ENCODE measurements at regions of chr11 and their contacts with region 1.

Region 1: GRCh38 chr11:57657194-57658022 is at the start of gene CLP1:
- DNase-seq: peak; percentile 92 to 97
- H3K4me3 ChIP-seq: peak within 1 kb of the TSS; percentile 86 to 99 (median 92)
- H3K27ac ChIP-seq: no peak within 1 kb of the TSS
- H3K4me1 ChIP-seq: no peaks in the 10 kb centered on the region; a peak in 3 of 7 replicates
- H3K27me3 ChIP-seq: no peaks in the 10 kb centered on the region; a peak in 2 of 7 replicates
- CTCF ChIP-seq: no peak
- EP300 ChIP-seq: no peak
- POLR2A ChIP-seq: peak; percentile 17 to 73
- RAD21 ChIP-seq: 0 out of 4 replicates have a peak, but pooled peaks of 1 of the 2 experiments have one; percentile 3
- total RNA-seq, gene CLP1: 29.3 and 29.9 TPM in 2 replicates

Region 2: GRCh38 chr11:57597916-57598830 is 59.2 kb before region 1 on chr11:
- CTCF ChIA-PET with region 1: no interaction called
- POLR2A ChIA-PET with region 1: interaction called, 1,546 read pairs
- DNase-seq: peak; percentile 75 to 87
- H3K4me3 ChIP-seq: peak overlapping the region; percentile 41 to 64 (median 54)
- H3K27ac ChIP-seq: peak overlapping the region; percentile 68; the same call in 1 of the 2 replicates
- H3K4me1 ChIP-seq: peaks cover 7 to 17% (median 11%) of the 10 kb centered on the region in 4 experiments
- H3K27me3 ChIP-seq: no peaks in the 10 kb centered on the region
- CTCF ChIP-seq: no peak
- EP300 ChIP-seq: peak in 1 of 2 experiments; percentile 86; a peak in 1 of 3 replicates
- POLR2A ChIP-seq: no peak; a peak in 1 of 3 replicates
- RAD21 ChIP-seq: peak in 1 of 2 experiments; percentile 12; a peak in 1 of 4 replicates

Region 3: DNA sequence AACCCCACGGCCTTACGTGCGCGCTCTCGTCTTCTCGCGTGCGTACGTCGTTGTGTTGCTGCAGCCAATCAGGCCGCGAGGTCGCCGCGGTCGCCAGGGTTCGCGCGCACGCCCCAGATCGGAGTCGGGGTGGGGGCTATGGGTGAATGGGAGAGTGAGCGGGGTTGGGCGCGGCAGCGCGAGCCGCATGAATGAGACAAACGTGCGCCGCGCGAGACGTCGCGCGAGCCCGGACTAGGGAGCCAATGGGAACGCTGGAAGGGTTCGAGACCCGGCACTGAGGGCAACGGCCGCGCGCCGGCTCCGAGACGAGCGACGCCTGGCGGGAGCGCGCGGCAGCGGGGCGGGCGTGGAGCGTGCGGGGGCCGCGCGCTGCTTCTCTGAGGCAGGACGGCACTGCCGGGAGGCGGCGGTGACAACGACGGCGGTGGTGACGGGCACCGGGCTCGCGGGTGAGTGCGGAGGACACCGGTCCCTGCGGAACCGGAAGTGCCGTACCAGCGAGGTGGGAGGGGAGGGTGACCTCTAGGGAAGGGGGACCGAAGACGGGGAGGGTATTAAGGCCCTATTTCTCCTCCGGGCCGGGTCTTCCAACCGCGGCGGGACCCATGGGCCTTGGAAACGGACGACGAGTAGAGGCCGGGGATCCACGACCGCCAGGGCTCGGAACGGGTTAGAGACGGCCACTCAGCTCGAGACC is 10.5 kb after region 1 on chr11 and contains the start of gene ZDHHC5:
- CTCF ChIA-PET with region 1: interaction called, 6 read pairs
- POLR2A ChIA-PET with region 1: interaction called, 79 read pairs
- DNase-seq: peak; percentile 97
- H3K4me3 ChIP-seq: peak within 1 kb of the TSS; percentile 90 to 95 (median 94)
- H3K27ac ChIP-seq: peak within 1 kb of the TSS; percentile 99
- H3K4me1 ChIP-seq: peaks cover 0 to 7% (median 2%) of the 10 kb centered on the region in 4 experiments; a peak in 3 of 7 replicates
- H3K27me3 ChIP-seq: no peaks in the 10 kb centered on the region
- CTCF ChIP-seq: peak; percentile 14 to 46 (median 37); a peak in 2 of 4 replicates
- EP300 ChIP-seq: 0 out of 3 replicates have a peak, but pooled peaks of 1 of the 2 experiments have one; percentile 27
- POLR2A ChIP-seq: peak; percentile 20 to 92; a peak in 2 of 3 replicates
- RAD21 ChIP-seq: no peak
- total RNA-seq, gene ZDHHC5: 54.8 and 56.3 TPM in 2 replicates

Region 4: DNA sequence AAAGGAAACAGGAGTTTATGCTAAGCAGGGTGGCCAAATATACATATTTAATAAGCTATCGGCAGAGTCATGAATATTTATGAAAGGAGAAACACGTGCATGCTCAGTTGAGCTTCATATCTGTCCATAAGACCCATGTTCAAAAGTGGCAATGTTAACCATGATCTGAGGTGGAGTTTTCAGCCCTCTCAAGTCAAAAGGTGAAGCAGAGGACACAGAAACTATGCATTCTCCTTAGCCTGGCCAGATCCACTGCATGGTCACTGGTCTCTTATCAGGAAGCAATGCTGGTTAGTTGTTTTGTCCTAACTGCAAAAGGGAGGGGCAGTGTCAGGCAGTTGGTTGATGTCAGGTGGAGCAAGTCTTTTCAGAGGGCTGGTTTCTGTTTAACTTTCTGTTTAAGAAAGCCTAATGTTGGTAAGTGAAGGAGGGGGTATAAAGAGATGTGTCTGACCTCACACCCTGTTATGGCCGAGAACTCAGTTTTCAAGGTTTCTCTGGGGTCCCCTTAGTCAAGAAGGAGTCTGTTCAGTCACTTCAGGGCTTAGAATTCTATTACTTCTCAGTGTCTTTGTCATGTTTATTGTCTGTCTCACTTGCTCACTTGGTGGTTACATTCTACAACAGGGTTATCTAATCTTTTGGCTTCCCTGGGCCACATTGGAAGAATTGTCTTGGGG is 78.4 kb after region 1 on chr11:
- CTCF ChIA-PET with region 1: no interaction called
- POLR2A ChIA-PET with region 1: no interaction called
- DNase-seq: no peak
- H3K4me3 ChIP-seq: no peak overlapping the region
- H3K27ac ChIP-seq: no peak overlapping the region
- H3K4me1 ChIP-seq: peaks cover 0 to 10% (median 2%) of the 10 kb centered on the region in 4 experiments; a peak in 3 of 7 replicates
- H3K27me3 ChIP-seq: no peaks in the 10 kb centered on the region
- CTCF ChIP-seq: no peak
- EP300 ChIP-seq: no peak
- POLR2A ChIP-seq: no peak
- RAD21 ChIP-seq: no peak